A549 (cell line): ENCODE measurements at regions of chr3 and their contacts with region 1.

Region 1: DNA sequence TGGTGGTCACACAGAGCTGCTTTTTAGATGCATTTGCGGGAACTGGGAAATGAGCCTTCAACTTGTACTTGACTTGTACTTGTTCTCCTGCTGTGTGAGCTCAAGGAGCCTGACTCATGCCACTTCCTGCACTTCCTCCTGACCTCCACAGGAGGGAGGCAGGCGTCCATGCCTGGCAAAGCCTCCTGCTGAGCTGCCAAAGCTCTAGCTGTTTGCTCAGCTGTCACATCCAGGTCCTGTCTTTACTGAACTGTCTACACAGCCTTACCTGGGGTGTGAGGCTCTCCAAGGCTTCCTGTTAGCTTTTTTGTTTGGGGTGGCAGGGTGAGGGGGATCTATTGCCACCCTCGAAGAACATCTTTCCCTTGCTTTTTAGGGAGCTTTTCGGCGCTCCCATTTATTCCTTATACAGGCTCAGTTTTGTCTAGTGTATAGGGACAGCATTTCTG is 6.4 kb downstream of the THPO start:
- DNase-seq: peak; percentile 82 to 83
- ATAC-seq: peak; percentile 94 to 96
- H3K4me3 ChIP-seq: no peak overlapping the region
- H3K27ac ChIP-seq: no peak overlapping the region
- H3K4me1 ChIP-seq: peaks cover 8% of the 10 kb centered on the region; the same call in 2 of the 3 replicates
- CTCF ChIP-seq: peak; percentile 75
- EP300 ChIP-seq: no peak
- POLR2A ChIP-seq: no peak
- RAD21 ChIP-seq: peak; percentile 87 to 93

Region 2: DNA sequence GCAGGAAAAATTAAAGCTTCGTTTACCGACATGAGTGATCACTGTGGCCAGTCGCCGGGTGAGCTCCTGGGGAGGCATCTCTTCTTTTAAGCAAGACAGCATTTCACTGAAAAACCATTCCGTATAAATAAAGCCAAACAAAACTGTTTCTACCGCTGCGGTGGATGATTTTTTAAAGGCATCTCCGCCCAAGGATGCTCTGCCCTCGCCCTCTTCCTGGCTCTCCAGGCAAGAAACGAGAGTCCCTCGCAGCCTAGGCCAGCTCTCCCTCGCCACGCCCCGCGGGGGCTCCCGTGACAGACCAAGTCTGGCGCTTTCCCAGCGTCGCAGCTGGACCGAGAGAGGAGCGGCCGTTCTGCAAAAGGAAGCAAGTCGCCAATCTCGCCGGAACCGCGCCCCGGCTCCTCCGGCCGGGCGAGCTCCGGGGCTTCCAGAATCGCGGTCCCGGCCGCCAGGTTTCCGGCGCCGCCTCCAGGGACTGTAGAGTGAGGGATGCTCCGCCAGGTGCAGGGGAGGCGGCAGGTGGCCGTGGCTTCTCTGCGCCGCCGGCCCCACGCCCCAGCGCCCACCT is 943.6 kb before region 1 on chr3:
- CTCF ChIA-PET with region 1: no interaction called
- POLR2A ChIA-PET with region 1: no interaction called
- DNase-seq: peak in 1 of 2 experiments; percentile 14
- ATAC-seq: peak; percentile 65 to 79
- H3K4me3 ChIP-seq: peak overlapping the region; percentile 76
- H3K27ac ChIP-seq: peak overlapping the region; percentile 30 to 39; a peak in 3 of 6 replicates
- H3K4me1 ChIP-seq: 0 out of 3 replicates have a peak, but pooled peaks cover 4% of the 10 kb centered on the region
- CTCF ChIP-seq: no peak
- EP300 ChIP-seq: no peak
- POLR2A ChIP-seq: no peak
- RAD21 ChIP-seq: no peak

Region 3: GRCh38 chr3:184250167-184250828 is 121.3 kb before region 1 on chr3:
- CTCF ChIA-PET with region 1: no interaction called
- POLR2A ChIA-PET with region 1: no interaction called
- DNase-seq: peak; percentile 86 to 90
- ATAC-seq: peak; percentile 86 to 87
- H3K4me3 ChIP-seq: peak overlapping the region; percentile 57
- H3K27ac ChIP-seq: peak overlapping the region; percentile 79 to 98
- H3K4me1 ChIP-seq: peaks cover 8% of the 10 kb centered on the region; the same call in 2 of the 3 replicates
- CTCF ChIP-seq: peak; percentile 73
- EP300 ChIP-seq: no peak
- POLR2A ChIP-seq: no peak
- RAD21 ChIP-seq: peak; percentile 62 to 63

Region 4: DNA sequence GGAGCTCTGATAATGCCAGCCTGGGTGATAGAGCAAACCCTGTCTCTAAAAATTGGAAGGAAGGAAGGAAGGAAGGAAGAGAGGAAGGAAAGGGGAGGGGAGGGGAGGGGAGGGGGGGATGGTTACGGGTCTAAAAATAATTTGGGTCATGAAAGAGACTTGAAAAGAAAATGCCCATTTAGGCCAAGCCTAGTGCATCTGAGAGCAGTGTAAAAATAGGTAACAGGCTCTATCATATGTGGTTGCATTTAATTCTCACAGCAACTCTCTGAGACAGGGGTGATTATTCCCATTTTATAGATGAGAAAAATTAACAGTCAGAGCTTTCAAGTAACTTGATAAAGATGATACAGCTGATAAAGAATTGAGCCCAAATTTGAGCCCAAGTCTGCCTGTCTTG is 99.3 kb before region 1 on chr3:
- CTCF ChIA-PET with region 1: no interaction called
- POLR2A ChIA-PET with region 1: no interaction called
- DNase-seq: no peak
- ATAC-seq: no peak
- H3K4me3 ChIP-seq: no peak overlapping the region
- H3K27ac ChIP-seq: no peak overlapping the region
- H3K4me1 ChIP-seq: no peaks in the 10 kb centered on the region
- CTCF ChIP-seq: no peak
- EP300 ChIP-seq: no peak
- POLR2A ChIP-seq: no peak
- RAD21 ChIP-seq: no peak

Region 5: GRCh38 chr3:184383033-184383740 is 11.6 kb after region 1 on chr3:
- CTCF ChIA-PET with region 1: interaction called, 38 read pairs
- POLR2A ChIA-PET with region 1: no interaction called
- DNase-seq: no peak
- ATAC-seq: no peak
- H3K4me3 ChIP-seq: no peak overlapping the region
- H3K27ac ChIP-seq: no peak overlapping the region
- H3K4me1 ChIP-seq: no peaks in the 10 kb centered on the region
- CTCF ChIP-seq: no peak
- EP300 ChIP-seq: no peak
- POLR2A ChIP-seq: no peak
- RAD21 ChIP-seq: no peak

Region 6: DNA sequence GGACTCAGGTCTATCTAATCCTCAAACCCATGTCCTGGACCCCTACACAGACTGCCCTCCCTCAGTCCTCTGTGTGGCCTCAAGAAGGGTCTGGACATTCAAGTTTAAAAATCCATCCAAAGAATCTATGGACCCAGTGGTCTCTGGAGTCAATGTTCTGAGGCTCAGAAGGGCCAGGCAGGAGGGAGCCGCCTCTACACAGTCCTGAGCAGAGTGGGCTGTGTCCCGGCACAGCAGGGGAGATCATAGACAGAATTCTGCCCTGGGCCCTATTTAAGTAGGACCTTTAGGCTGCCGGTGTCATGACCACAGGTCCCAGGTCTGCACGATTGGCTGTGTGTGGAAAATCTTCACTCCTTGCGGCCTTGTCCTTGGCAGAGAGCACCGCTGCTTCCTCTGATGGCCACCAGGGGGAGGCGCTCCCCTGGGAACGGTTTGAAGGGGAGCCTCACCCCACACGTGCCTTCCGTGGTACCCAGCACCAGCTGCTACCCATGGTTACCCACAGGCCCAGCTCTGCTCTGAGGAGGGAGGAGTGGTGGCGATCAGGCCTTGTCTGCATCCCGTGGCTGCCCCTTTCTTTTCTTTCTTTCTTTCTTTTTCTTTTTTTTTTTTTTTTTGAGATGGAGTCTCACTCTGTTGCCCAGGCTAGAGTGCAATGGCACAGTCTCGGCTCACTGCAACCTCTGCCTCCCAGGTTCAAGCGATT is 46.2 kb after region 1 on chr3:
- CTCF ChIA-PET with region 1: interaction called, 19 read pairs
- POLR2A ChIA-PET with region 1: no interaction called
- DNase-seq: peak; percentile 44 to 64
- ATAC-seq: peak; percentile 95 to 99
- H3K4me3 ChIP-seq: no peak overlapping the region
- H3K27ac ChIP-seq: no peak overlapping the region
- H3K4me1 ChIP-seq: no peaks in the 10 kb centered on the region
- CTCF ChIP-seq: peak; percentile 65
- EP300 ChIP-seq: no peak
- POLR2A ChIP-seq: no peak
- RAD21 ChIP-seq: peak; percentile 73 to 81

Region 7: DNA sequence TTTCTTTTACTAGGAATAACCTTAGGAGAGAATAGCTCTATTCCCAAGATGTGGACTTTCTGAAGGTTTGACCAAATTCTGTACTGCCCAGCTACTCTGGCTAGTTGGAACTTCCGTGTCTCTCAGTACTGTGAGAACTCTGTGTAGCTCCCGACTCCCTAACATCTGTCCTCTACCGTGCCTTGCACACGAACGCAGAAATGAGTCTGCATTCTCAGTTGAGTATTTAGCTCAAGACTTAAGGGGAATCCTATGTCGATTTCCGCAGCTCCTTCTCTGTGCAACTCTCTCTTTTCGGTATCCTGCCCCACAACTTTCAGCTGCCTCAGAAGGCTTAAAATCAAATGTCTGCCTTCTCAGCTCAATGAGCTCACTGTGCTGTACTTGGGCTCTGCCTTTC is 103.3 kb after region 1 on chr3:
- CTCF ChIA-PET with region 1: interaction called, 13 read pairs
- POLR2A ChIA-PET with region 1: no interaction called
- DNase-seq: no peak
- ATAC-seq: no peak
- H3K4me3 ChIP-seq: no peak overlapping the region
- H3K27ac ChIP-seq: no peak overlapping the region
- H3K4me1 ChIP-seq: no peaks in the 10 kb centered on the region
- CTCF ChIP-seq: no peak
- EP300 ChIP-seq: no peak
- POLR2A ChIP-seq: no peak
- RAD21 ChIP-seq: no peak

Region 8: DNA sequence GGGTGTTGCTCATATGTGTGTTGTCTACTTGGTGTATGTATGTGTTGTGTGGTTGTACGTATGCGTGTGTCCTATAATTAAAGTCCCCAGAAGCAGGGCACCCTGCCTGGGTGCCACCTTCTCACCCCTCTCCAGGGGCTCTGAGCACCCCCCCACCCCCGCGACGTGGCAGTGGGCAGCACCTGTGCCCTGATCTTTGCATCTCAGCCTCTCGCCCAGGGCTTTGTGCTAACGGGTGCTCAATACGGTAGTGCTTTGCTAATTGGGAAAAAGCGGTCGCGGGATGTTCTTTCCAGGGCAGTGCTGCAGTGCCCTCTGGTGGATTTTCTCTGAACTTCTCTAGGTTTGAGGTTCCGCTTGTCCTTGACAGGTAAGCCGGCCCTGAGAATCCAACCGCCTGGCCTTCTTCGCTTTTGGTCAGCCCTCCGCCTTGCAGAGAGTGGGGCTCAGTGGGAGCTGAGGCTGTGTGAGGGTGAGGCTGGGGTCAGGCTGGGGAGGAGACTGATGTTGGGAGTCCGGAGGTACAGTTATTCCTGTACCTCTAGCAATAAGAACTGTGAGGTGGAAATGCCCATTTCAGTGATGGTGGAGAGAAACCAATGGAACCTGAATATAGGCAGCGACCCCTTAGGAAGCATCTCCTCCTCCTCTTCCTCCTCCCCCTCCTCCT is 172.4 kb after region 1 on chr3:
- CTCF ChIA-PET with region 1: interaction called, 171 read pairs
- POLR2A ChIA-PET with region 1: no interaction called
- DNase-seq: peak; percentile 66 to 87
- ATAC-seq: peak; percentile 89 to 94
- H3K4me3 ChIP-seq: no peak overlapping the region
- H3K27ac ChIP-seq: no peak overlapping the region
- H3K4me1 ChIP-seq: no peaks in the 10 kb centered on the region
- CTCF ChIP-seq: peak; percentile 71
- EP300 ChIP-seq: no peak
- POLR2A ChIP-seq: no peak
- RAD21 ChIP-seq: peak; percentile 82 to 84

Region 9: GRCh38 chr3:185021256-185021655 is 649.7 kb after region 1 on chr3:
- CTCF ChIA-PET with region 1: no interaction called
- POLR2A ChIA-PET with region 1: no interaction called
- DNase-seq: no peak
- ATAC-seq: no peak
- H3K4me3 ChIP-seq: no peak overlapping the region
- H3K27ac ChIP-seq: no peak overlapping the region
- H3K4me1 ChIP-seq: no peaks in the 10 kb centered on the region
- CTCF ChIP-seq: no peak
- EP300 ChIP-seq: no peak
- POLR2A ChIP-seq: no peak
- RAD21 ChIP-seq: no peak